ENCODE measurements at regions of chr6 and their contacts with region 1.

Region 1: DNA sequence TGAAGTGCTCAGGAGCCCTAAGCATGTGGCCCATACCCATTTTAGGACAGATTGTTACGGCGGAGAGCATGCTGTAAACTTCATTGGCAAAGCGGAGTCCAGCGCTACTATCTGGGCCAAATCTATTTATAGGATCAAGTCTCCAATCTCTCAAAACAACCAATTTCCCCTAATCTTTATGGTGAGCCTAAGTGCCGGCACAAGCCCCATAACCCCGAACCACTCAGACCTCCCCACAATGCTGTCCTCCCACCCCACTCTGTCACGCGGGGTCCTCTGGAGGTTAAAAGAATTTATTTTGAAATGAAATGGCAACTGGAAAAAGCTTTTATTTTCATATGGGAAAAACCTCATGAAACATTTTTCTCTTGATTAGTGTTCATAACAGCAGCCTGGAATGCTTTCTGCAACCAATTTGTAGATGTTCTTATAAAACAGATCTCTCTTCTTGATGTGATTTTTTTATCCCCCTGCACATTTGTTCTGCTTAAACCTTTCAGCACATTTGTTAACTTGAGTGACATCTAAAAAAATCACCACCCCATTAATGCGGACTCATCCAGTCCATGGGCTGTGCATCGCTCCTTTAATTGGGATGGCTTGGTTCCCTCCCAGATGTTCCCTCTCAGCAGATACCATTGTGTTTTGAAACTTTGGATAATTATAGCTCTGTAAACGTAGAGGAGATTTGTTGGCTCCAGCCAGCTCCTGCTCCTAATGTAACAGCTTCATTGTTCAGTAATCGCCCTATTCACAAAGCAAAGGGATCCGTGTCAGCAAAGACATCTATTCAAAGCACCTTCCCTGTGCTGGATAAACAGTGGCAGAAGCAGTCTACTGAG is 323.6 kb downstream of the CD83 start:
- DNase-seq: no peak
- H3K4me3 ChIP-seq: no peak overlapping the region
- H3K27ac ChIP-seq: peak overlapping the region; percentile 5 to 31
- H3K4me1 ChIP-seq: no peaks in the 10 kb centered on the region
- H3K27me3 ChIP-seq: no peaks in the 10 kb centered on the region
- CTCF ChIP-seq: no peak
- POLR2A ChIP-seq: no peak

Region 2: DNA sequence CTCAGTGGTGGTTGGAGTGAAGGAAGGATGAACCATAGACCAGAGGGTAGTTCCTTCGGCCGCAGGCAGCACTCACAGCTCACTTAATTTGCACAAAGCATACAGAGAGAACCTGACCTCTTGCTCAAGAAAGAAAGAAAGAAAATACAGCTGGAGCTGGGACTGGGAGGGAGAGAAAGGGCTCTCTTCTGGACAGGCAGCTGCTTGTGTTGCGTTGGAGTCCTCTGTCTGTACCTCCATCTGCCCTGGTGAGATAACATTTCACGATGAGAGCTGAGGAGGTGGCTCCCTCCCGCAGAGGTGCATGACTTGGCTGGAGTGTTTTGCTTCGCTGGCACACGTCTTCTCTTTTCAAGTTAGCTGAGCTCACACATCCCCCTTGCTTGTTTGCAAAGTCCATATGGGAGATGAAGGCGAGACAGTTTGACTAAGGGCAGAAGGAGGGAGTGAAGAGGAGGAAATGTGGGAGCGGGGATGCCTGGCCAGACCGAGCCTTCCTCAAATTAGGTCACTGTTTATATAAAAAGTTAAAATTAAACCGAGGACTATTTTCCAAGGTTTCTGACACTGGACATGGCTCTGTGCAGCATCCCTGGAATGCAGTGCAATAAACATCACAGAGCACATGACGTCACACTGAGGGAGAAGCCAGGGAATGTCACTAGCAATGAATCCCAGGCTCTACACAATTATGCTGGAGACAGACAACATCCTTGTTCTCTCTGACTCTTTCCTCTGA is 35.8 kb after region 1 on chr6:
- intact Hi-C with region 1: loop called (anchors 2 kb)
- DNase-seq: peak; percentile 20
- H3K4me3 ChIP-seq: no peak overlapping the region
- H3K27ac ChIP-seq: peak overlapping the region; percentile 18 to 48
- H3K4me1 ChIP-seq: no peaks in the 10 kb centered on the region
- H3K27me3 ChIP-seq: no peaks in the 10 kb centered on the region
- CTCF ChIP-seq: no peak
- POLR2A ChIP-seq: no peak

Region 3: GRCh38 chr6:14665827-14666724 is 224.9 kb after region 1 on chr6:
- intact Hi-C with region 1: no loop called
- DNase-seq: no peak
- H3K4me3 ChIP-seq: no peak overlapping the region
- H3K27ac ChIP-seq: no peak overlapping the region
- H3K4me1 ChIP-seq: no peaks in the 10 kb centered on the region
- H3K27me3 ChIP-seq: no peaks in the 10 kb centered on the region
- CTCF ChIP-seq: no peak
- POLR2A ChIP-seq: no peak

Region 4: GRCh38 chr6:14721103-14721746 is 280.1 kb after region 1 on chr6:
- intact Hi-C with region 1: no loop called
- DNase-seq: no peak
- H3K4me3 ChIP-seq: no peak overlapping the region
- H3K27ac ChIP-seq: no peak overlapping the region
- H3K4me1 ChIP-seq: no peaks in the 10 kb centered on the region
- H3K27me3 ChIP-seq: no peaks in the 10 kb centered on the region
- CTCF ChIP-seq: no peak
- POLR2A ChIP-seq: no peak

Measured in prostate gland (tissue), 2 donors.